A549 (cell line): ENCODE measurements at regions of chr3 and their contacts with region 1.

Region 1: DNA sequence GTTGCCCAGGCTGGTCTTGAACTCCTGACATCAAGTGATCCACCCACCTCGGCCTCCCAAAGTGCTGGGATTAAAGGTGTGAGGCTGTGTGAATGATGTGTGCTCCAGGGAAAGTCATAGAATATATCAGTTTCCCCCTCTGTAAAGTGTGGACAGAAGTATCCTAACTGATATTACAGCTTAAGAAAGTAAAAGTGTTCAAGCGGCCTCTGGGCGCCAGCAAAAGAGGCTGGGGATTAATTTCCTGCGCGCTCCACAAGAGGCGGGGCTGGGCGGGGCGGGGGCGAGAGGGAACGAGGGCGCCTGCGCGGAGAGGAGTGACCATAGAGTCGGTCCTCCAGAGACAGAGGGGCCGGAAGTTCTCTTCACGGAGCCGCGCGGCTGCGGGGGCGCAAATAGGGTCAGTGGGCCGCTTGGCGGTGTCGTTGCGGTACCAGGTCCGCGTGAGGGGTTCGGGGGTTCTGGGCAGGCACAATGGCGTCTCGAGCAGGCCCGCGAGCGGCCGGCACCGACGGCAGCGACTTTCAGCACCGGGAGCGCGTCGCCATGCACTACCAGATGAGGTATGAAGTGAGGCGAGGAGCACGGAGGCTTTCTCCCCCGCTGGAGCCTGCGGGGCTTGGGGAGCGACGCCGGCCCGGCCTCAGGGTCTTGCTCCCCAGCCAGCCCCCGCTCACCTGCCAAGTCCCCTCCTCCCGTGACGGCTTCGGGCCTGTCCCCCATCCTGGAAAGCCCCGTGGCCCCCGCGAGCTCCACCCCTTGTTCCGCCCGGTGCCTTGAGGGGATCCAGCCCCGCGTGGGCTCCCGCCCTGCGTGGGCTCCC is at the start of gene JAGN1:
- DNase-seq: peak; percentile 87 to 93
- ATAC-seq: peak; percentile 78 to 89
- H3K4me3 ChIP-seq: peak within 1 kb of the TSS; percentile 81
- H3K27ac ChIP-seq: peak within 1 kb of the TSS; percentile 94 to 98
- H3K4me1 ChIP-seq: peaks cover 46% of the 10 kb centered on the region
- CTCF ChIP-seq: no peak
- EP300 ChIP-seq: no peak
- POLR2A ChIP-seq: peak; percentile 85
- RAD21 ChIP-seq: peak in 1 of 2 experiments; percentile 12; a peak in 1 of 5 replicates
- polyA plus RNA-seq, gene JAGN1: 63.2 and 79.3 TPM in 2 replicates

Region 2: GRCh38 chr3:9878700-9879099 is 11.8 kb before region 1 on chr3:
- CTCF ChIA-PET with region 1: interaction called, 4 read pairs
- POLR2A ChIA-PET with region 1: interaction called, 21 read pairs
- DNase-seq: peak; percentile 65 to 74
- ATAC-seq: peak; percentile 84 to 88
- H3K4me3 ChIP-seq: no peak overlapping the region; the same call in 2 of the 3 replicates
- H3K27ac ChIP-seq: peak overlapping the region; percentile 75 to 82
- H3K4me1 ChIP-seq: peaks cover 31% of the 10 kb centered on the region
- CTCF ChIP-seq: no peak
- EP300 ChIP-seq: no peak
- POLR2A ChIP-seq: no peak
- RAD21 ChIP-seq: no peak

Region 3: DNA sequence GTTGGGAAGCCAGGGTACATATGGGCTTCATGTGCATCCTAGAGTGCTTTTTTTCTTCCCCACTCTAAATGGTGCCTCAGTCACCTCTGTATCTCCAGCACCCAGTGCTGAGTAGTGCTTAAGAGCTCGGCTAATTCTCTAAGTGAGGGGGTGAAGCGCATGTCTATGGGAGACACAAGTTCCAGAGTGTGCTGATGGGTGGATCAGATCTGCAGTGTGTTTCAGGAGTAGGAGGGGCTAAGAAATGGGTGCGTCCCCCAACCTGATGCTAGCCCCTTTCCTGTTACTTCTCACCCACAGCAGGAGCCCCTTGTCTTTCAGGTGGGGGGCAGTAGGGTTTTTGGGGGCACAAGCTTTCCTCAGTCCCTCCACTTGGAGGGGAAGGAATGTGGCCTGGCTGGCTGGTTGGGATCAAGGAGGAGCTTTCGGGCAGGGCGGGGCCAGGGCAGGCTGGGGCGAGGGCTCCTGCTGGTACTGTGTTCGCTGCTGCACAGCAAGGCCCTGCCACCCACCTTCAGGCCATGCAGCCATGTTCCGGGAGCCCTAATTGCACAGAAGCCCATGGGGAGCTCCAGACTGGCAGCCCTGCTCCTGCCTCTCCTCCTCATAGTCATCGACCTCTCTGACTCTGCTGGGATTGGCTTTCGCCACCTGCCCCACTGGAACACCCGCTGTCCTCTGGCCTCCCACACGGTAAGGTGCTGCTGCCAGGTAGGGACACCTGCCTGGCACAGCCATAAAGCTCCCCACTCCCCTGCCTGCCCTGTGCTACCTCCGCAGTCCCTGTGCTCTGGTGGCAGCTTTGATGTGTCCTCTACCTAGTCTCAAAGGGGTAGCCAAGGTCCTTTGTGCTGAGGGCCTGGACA is 12.1 kb after region 1 on chr3 and contains the start of gene IL17RE:
- CTCF ChIA-PET with region 1: interaction called, 11 read pairs
- POLR2A ChIA-PET with region 1: interaction called, 12 read pairs
- DNase-seq: no peak
- ATAC-seq: peak; percentile 20 to 33; a peak in 3 of 6 replicates
- H3K4me3 ChIP-seq: no peak within 1 kb of the TSS
- H3K27ac ChIP-seq: peak within 1 kb of the TSS in 1 of 2 experiments; percentile 67; a peak in 3 of 6 replicates
- H3K4me1 ChIP-seq: peaks cover 33% of the 10 kb centered on the region
- CTCF ChIP-seq: no peak
- EP300 ChIP-seq: no peak
- POLR2A ChIP-seq: no peak
- RAD21 ChIP-seq: no peak
- polyA plus RNA-seq, gene IL17RE: 0.53 and 0.60 TPM in 2 replicates

Region 4: GRCh38 chr3:9909221-9910013 is 19.0 kb after region 1 on chr3:
- CTCF ChIA-PET with region 1: interaction called, 11 read pairs
- POLR2A ChIA-PET with region 1: no interaction called
- DNase-seq: no peak
- ATAC-seq: no peak
- H3K4me3 ChIP-seq: no peak overlapping the region
- H3K27ac ChIP-seq: peak overlapping the region in 1 of 2 experiments; percentile 20; a peak in 1 of 6 replicates
- H3K4me1 ChIP-seq: peaks cover 26% of the 10 kb centered on the region
- CTCF ChIP-seq: no peak
- EP300 ChIP-seq: no peak
- POLR2A ChIP-seq: no peak
- RAD21 ChIP-seq: no peak